Right ventricle myocardium inferior (tissue), 1 donor: ENCODE measurements at regions of chr11 and their contacts with region 1.

Region 1: GRCh38 chr11:78574386-78575381 is at the start of gene NARS2:
- DNase-seq: peak; percentile 99
- ATAC-seq: peak; percentile 100
- total RNA-seq, gene NARS2: 15.6 TPM

Region 2: DNA sequence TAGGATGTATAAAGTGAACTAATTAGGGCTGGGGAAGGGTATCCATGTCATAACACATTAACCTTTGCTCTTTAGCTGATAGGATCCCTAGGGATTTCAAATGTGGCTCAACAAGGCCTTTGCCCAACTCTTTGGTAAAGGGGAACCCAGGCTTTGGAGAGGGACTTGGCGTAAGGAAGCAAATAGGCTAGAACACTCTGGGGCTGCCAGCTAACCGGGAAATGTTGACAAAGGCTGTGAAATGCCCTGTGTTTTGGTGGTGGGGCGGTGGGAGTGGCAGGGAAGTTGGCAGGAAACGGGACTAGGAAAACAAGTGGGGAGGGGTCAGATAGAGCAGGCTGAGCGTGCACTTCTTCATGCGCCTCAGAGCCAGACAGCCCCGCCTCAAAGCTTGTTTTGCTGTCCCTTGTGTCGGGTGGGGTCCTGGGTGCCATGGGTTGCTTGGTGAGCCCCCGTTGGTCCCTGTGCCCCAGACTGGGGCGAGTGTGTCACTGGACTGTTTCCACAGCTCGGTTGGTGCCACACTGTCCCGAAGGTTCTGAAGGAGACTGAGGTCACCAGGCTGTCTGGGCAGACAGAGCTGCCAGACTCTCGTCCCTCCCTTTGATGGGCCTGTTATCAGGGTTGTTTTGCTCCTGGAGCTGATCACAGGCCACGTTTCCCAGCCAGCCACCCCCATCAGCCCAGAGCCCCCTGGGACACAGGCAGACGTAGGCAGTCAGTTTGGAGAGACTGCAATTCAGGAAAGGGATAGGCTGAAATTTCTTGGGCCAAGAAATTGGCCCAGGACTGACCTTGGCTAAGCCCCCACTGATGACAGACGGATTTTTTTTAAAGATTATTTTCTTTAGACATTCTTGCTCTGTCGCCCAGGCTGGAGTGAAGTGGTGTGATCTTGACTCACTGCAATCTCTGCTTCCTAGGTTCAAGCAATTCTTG is 405.9 kb before region 1 on chr11:
- intact Hi-C with region 1: loop called (anchors 10 kb)
- DNase-seq: peak; percentile 90
- ATAC-seq: peak; percentile 94

Region 3: GRCh38 chr11:78731027-78731426 is 156.3 kb after region 1 on chr11:
- intact Hi-C with region 1: no loop called
- DNase-seq: no peak
- ATAC-seq: no peak